Vagina (tissue), 2 donors: ENCODE measurements at regions of chr15 and their contacts with region 1.

Region 1: GRCh38 chr15:64430000-64430735 is 30.2 kb upstream of the ZNF609 start:
- DNase-seq: peak in 1 of 2 donors; percentile 87
- H3K4me3 ChIP-seq: no peak overlapping the region
- H3K27ac ChIP-seq: peak overlapping the region; percentile 59
- H3K4me1 ChIP-seq: peaks cover 20% of the 10 kb centered on the region
- H3K27me3 ChIP-seq: no peaks in the 10 kb centered on the region
- CTCF ChIP-seq: no peak
- POLR2A ChIP-seq: no peak

Region 2: GRCh38 chr15:64667736-64668161 is 237.6 kb after region 1 on chr15:
- intact Hi-C with region 1: loop called (anchors 10 kb)
- DNase-seq: no peak
- H3K4me3 ChIP-seq: no peak overlapping the region
- H3K27ac ChIP-seq: no peak overlapping the region
- H3K4me1 ChIP-seq: no peaks in the 10 kb centered on the region
- H3K27me3 ChIP-seq: no peaks in the 10 kb centered on the region
- CTCF ChIP-seq: no peak
- POLR2A ChIP-seq: no peak